Activated CD4-positive, alpha-beta T cell treated with anti-CD3 and anti-CD28 coated beads for 36 hours (primary cell): ENCODE measurements at regions of chr12 and their contacts with region 1.

Region 1: GRCh38 chr12:751192-751998 is 984 bp upstream of the WNK1 start:
- DNase-seq: peak; percentile 93
- ATAC-seq: peak; percentile 50
- H3K4me3 Mint-ChIP-seq: no peak overlapping the region
- H3K27ac Mint-ChIP-seq: no peak overlapping the region
- H3K4me1 Mint-ChIP-seq: peaks cover 17% of the 10 kb centered on the region
- H3K27me3 Mint-ChIP-seq: no peaks in the 10 kb centered on the region

Region 2: DNA sequence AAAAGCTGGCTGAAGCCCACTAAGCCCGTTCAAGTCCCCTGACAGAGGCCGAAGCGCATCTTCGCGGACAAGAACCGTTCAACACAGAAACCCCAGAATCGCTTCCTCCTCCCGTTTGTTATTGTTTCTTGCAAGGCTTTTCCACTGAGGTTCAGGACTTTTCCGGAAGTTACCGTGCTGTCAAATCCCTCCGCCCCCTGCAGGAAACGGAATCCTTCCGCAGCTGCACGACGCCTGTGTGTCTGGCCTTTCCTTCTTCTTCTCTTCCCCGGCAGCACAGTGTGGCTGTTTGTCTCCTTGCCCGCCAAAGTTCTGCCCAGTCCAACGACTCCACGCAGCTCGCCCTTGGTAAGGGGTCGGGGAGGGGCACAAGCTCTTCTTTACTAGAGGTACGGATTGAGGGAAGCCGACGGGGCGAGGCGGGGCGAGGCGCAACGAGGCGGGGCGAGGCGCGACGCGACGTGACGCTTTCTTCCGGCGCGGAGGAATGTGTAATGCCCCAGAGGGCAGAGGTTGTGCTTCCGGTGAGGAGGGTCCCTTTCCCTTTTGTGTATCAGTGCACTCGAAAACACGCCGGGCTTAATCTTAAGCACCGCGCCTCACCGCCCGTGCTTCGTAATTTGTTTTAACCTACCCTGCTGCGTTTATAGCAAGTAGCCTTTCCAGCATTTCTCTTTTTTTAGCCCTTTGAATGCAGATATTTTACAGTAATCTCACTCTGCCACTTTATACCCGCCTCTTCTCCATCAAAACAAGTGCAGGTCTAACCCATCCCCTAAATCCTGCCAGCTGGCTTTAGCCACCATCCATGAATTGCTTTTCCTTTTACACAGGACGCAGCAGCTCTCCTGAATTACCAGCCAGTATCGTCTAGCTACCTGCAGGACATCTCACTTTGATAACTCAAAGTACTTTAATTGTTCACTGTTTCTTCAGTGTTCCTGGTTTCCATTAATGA is 362.0 kb before region 1 on chr12 and contains the start of gene KDM5A:
- CTCF ChIA-PET with region 1: no interaction called
- POLR2A ChIA-PET with region 1: no interaction called
- intact Hi-C with region 1: loop called in 1 of 2 experiments (anchors 1 kb)
- DNase-seq: peak; percentile 94
- ATAC-seq: peak; percentile 94
- H3K4me3 Mint-ChIP-seq: peak within 1 kb of the TSS; percentile 89
- H3K27ac Mint-ChIP-seq: peak within 1 kb of the TSS; percentile 96
- H3K4me1 Mint-ChIP-seq: peaks cover 26% of the 10 kb centered on the region
- H3K27me3 Mint-ChIP-seq: no peaks in the 10 kb centered on the region
- total RNA-seq, gene KDM5A: 40.3 to 58.7 TPM

Region 3: DNA sequence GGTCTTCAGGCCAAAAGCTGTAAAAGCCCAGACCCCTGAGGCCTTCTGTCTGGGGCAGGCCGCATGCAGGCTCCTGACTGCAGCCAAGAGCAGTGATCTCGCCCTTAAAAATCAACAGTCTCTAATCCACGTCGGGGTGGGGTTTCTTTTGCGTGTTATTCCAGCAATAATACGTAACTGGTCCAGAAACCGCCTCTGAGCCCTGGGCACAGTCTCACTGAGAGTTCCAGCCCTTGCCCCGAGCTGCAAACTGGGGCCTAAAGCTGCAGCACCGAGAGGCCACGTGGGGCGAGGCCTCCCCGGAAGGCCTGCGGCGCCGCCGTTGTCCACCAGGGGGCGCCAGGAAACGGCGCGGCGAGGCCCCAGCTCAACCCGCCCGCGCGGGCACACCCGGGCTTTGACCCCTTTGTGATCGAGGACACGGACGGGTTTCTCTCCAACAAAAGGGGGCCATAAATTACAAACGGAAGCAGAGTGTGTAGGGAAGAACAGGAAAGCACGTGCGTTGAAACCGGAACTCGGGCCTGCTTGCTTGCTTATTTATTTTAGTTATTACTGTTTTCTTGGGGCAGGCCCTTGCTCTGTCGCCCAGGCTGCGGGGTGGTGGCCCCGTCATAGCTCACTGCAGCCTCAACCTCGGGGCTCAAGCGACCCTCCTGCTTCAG is 175.3 kb before region 1 on chr12:
- CTCF ChIA-PET with region 1: interaction called, 64 read pairs
- POLR2A ChIA-PET with region 1: interaction called, 8 read pairs
- intact Hi-C with region 1: loop called (anchors 1 to 2 kb)
- DNase-seq: peak; percentile 91
- ATAC-seq: peak; percentile 83
- H3K4me3 Mint-ChIP-seq: peak overlapping the region; percentile 46
- H3K27ac Mint-ChIP-seq: peak overlapping the region; percentile 77
- H3K4me1 Mint-ChIP-seq: peaks cover 42% of the 10 kb centered on the region
- H3K27me3 Mint-ChIP-seq: no peaks in the 10 kb centered on the region

Region 4: DNA sequence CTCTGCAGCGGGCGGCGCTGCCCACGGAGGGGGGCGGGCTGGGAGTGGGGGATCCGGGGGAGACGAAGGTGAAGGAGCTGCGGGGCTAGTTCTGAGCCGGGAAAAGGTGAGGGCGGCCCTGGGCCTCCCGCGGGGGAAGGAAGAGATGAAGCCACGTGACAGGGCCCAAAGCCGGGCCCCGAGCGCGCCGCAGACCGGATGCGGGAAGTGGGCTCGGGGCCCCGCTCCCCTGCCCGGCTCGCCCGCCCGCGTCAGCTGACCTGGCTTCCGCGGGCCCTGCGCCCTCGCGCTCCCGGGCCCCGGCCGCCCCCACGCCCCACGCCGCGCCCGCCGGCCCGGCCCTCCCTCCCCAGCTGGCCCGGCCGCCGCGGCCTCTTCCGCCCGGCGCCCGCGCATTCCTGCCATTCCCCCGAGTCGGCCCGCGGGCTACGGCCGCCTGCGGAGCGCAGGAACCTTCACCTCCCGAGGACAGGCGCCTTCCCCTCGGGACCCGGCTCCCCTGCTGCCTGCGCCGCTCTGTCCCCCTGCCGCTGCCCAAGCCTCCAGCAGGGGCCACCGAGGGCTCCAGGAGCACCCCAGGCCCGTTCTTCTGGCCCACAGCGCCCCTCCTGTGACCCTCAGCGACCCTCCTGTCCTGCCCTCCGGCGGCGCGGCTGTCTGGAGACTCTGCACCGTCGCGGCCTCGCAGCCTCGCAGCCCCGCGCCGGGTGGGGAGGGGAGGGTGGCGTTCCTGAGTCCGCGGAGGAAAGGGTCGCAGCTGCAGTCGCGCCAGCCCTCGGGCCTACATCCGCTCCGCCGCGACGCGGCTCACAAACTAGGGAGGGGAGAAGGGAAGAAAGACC is 108.5 kb before region 1 on chr12:
- CTCF ChIA-PET with region 1: interaction called, 5 read pairs
- POLR2A ChIA-PET with region 1: no interaction called
- intact Hi-C with region 1: loop called in 1 of 2 experiments (anchors 1 kb)
- DNase-seq: peak; percentile 85
- ATAC-seq: peak; percentile 59
- H3K4me3 Mint-ChIP-seq: peak overlapping the region; percentile 83
- H3K27ac Mint-ChIP-seq: peak overlapping the region; percentile 97
- H3K4me1 Mint-ChIP-seq: peaks cover 64% of the 10 kb centered on the region
- H3K27me3 Mint-ChIP-seq: no peaks in the 10 kb centered on the region

Region 5: GRCh38 chr12:712172-712863 is 39.1 kb before region 1 on chr12:
- CTCF ChIA-PET with region 1: interaction called, 8 read pairs
- POLR2A ChIA-PET with region 1: interaction called, 6 read pairs
- intact Hi-C with region 1: loop called in 1 of 2 experiments (anchors 2 kb)
- DNase-seq: no peak
- ATAC-seq: no peak
- H3K4me3 Mint-ChIP-seq: no peak overlapping the region
- H3K27ac Mint-ChIP-seq: peak overlapping the region; percentile 49
- H3K4me1 Mint-ChIP-seq: peaks cover 40% of the 10 kb centered on the region
- H3K27me3 Mint-ChIP-seq: no peaks in the 10 kb centered on the region

Region 6: DNA sequence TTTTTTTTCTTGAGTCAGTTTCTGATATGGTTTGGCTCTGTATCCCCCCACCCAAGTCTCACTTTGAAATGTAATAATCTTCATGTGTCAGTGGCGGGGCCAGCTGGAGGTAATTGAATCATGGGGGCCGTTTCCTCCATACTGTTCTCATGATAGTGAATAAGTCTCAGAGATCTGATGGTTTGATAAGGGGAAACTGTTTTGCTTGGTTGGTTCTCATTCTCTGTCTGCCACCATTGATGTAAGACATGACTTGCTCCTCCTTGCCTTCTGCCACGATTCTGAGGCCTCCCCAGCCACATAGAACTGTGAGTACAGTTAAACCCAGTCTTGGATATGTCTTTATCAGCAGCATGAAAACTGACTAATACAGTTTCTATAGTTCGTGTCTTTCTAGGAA is 43.9 kb after region 1 on chr12:
- CTCF ChIA-PET with region 1: interaction called, 8 read pairs
- POLR2A ChIA-PET with region 1: interaction called, 3 read pairs
- intact Hi-C with region 1: loop called (anchors 1 to 2 kb)
- DNase-seq: peak; percentile 86
- ATAC-seq: peak; percentile 90
- H3K4me3 Mint-ChIP-seq: peak overlapping the region; percentile 56
- H3K27ac Mint-ChIP-seq: peak overlapping the region; percentile 85
- H3K4me1 Mint-ChIP-seq: peaks cover 84% of the 10 kb centered on the region
- H3K27me3 Mint-ChIP-seq: no peaks in the 10 kb centered on the region

Region 7: GRCh38 chr12:1594261-1595025 is 843.0 kb after region 1 on chr12 and contains the start of gene FBXL14:
- CTCF ChIA-PET with region 1: no interaction called
- POLR2A ChIA-PET with region 1: no interaction called
- intact Hi-C with region 1: loop called in 1 of 2 experiments (anchors 1 kb)
- DNase-seq: peak; percentile 93
- ATAC-seq: peak; percentile 57
- H3K4me3 Mint-ChIP-seq: peak within 1 kb of the TSS; percentile 98
- H3K27ac Mint-ChIP-seq: peak within 1 kb of the TSS; percentile 93
- H3K4me1 Mint-ChIP-seq: peaks cover 38% of the 10 kb centered on the region
- H3K27me3 Mint-ChIP-seq: no peaks in the 10 kb centered on the region
- total RNA-seq, gene FBXL14: 17.0 to 17.8 TPM

Region 8: GRCh38 chr12:1716215-1716862 is 964.9 kb after region 1 on chr12:
- CTCF ChIA-PET with region 1: no interaction called
- POLR2A ChIA-PET with region 1: no interaction called
- intact Hi-C with region 1: no loop called
- DNase-seq: no peak
- ATAC-seq: peak; percentile 33
- H3K4me3 Mint-ChIP-seq: no peak overlapping the region
- H3K27ac Mint-ChIP-seq: no peak overlapping the region
- H3K4me1 Mint-ChIP-seq: peaks cover 31% of the 10 kb centered on the region
- H3K27me3 Mint-ChIP-seq: no peaks in the 10 kb centered on the region